ENCODE measurements at regions of chr5 and their contacts with region 1.

Region 1: GRCh38 chr5:14727428-14727865 is 62.9 kb downstream of the OTULIN start:
- DNase-seq: peak; percentile 68 to 76
- H3K4me3 ChIP-seq: no peak overlapping the region
- H3K27ac ChIP-seq: no peak overlapping the region
- H3K4me1 ChIP-seq: peaks cover 0 to 4% of the 10 kb centered on the region in 2 donors
- H3K27me3 ChIP-seq: no peaks in the 10 kb centered on the region
- CTCF ChIP-seq: peak; percentile 85 to 96 (median 89)
- POLR2A ChIP-seq: no peak

Region 2: GRCh38 chr5:15013654-15014463 is 286.4 kb after region 1 on chr5:
- intact Hi-C with region 1: loop called (anchors 5 kb)
- DNase-seq: no peak
- H3K4me3 ChIP-seq: no peak overlapping the region
- H3K27ac ChIP-seq: no peak overlapping the region
- H3K4me1 ChIP-seq: no peaks in the 10 kb centered on the region
- H3K27me3 ChIP-seq: no peaks in the 10 kb centered on the region
- CTCF ChIP-seq: peak; percentile 52 to 70 (median 60)
- POLR2A ChIP-seq: no peak